ENCODE measurements at regions of chr3 and their contacts with region 1.

Region 1: DNA sequence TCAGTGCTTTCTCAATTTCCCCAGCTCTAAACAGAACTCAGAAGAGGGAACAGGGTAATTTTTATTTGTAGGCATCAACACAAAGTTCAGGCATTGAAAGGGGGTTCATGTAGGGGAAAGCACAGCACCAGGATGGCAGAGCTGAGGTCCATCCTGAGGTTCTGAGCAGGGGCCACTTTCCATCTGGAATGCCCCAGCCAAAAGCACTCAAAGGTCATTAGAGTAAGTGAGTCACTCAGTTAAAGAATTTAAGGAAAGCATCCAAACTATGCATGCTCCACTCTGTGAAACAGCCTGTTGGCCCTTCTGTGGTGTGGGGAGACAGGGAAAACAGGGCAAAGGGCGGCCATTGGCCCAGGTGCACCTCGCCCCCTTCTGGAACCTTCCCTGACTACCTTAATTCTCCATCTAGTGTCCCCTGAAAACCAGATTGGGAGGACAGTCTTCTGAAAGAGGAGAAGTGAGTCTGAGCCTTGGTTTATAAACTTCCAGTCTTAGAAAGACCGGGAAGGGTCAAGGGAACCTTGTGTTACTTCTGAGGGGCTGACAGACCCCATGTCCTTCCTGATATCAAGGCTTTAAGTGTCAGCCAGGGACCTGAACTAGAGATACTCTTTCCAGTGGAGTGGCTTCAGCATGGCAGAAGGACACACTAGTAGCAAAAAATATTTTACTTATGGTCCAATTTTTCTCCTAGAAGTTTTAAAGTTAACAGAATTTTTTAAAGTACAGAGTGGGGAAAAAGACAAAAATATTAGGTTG is 133.3 kb downstream of the MYLK start:
- DNase-seq: peak; percentile 75 to 87
- H3K4me3 ChIP-seq: no peak overlapping the region
- H3K4me3 Mint-ChIP-seq: peak overlapping the region; percentile 34
- H3K27ac Mint-ChIP-seq: peak overlapping the region; percentile 94
- H3K4me1 ChIP-seq: peaks cover 59% of the 10 kb centered on the region
- H3K4me1 Mint-ChIP-seq: peaks cover 33% of the 10 kb centered on the region
- H3K27me3 ChIP-seq: no peaks in the 10 kb centered on the region
- H3K27me3 Mint-ChIP-seq: no peaks in the 10 kb centered on the region
- CTCF ChIP-seq: no peak

Region 2: GRCh38 chr3:123818921-123819429 is 68.1 kb after region 1 on chr3:
- CTCF ChIA-PET with region 1: interaction called, 5 read pairs
- POLR2A ChIA-PET with region 1: no interaction called
- intact Hi-C with region 1: loop called (anchors 2 kb)
- DNase-seq: peak; percentile 66 to 70
- H3K4me3 ChIP-seq: no peak overlapping the region
- H3K4me3 Mint-ChIP-seq: peak overlapping the region; percentile 35
- H3K27ac Mint-ChIP-seq: peak overlapping the region; percentile 43
- H3K4me1 ChIP-seq: peaks cover 37% of the 10 kb centered on the region
- H3K4me1 Mint-ChIP-seq: peaks cover 21% of the 10 kb centered on the region
- H3K27me3 ChIP-seq: no peaks in the 10 kb centered on the region
- H3K27me3 Mint-ChIP-seq: no peaks in the 10 kb centered on the region
- CTCF ChIP-seq: no peak